Adrenal gland (tissue), 19 donors: ENCODE measurements at regions of chr18 and their contacts with region 1.

Region 1: DNA sequence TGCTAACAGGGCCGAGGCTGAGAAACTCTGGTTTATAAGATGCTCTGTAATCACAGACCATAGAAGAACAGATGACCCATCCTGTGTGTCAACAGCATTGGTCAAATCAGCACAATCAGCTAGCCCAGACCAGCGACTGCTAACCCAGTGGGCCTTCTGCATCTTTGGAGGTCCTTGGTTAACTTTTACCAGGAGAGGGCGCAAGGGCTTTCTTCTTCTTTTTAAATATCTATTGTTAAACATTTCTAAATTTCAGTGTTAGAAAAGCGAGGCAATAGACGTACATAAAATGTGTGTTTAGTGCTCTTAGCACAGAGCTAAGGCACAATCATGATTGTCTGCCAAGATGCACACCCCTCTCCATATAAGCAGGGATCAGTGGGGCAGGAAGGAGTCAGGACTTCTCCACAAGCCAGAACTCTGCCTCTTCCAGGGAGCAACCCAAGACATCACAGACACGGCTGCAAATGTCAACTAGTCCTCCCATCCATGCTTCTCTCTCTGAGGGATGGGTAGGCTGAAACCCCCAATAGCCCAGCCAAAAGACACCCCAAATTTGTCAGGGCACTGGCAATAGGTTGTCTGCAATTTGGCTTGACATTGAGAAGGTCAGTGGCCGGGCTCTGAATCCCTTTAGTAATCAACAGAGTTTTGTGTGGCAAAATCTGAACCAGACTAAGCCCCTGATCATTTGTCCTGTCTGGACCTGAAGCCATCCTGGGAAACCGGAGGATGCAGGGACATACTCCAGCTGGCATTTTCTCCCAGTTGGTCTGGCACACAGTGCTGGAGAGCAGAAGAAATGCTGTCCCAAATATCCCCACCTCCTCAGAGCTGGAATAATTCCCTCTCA is 188.2 kb downstream of the BCL2 start:
- DNase-seq: peak; percentile 27 to 79 (median 48)
- H3K4me3 ChIP-seq: no peak overlapping the region
- H3K27ac ChIP-seq: no peak overlapping the region
- H3K4me1 ChIP-seq: no peaks in the 10 kb centered on the region
- H3K27me3 ChIP-seq: no peaks in the 10 kb centered on the region
- CTCF ChIP-seq: peak; percentile 44 to 66 (median 58)
- POLR2A ChIP-seq: no peak

Region 2: DNA sequence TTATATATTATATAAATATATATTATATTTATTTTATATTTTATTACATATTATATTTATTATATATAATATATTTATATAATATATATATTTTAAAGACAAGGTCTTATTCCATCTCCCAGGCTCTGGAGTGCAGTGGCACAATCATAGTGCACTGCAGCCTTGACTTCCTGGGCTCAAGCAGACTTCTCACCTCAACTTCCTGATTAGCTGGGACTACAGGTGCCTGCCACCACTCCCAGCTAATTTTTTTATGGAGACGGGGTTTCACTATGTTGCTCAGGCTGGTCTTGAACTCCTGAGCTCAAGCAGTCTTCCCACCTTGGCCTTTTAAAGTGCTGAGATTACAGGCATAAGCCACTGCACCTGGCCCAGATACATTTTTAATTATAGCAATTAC is 305.9 kb before region 1 on chr18:
- intact Hi-C with region 1: no loop called
- DNase-seq: no peak
- H3K4me3 ChIP-seq: no peak overlapping the region
- H3K27ac ChIP-seq: no peak overlapping the region
- H3K4me1 ChIP-seq: peaks cover 4 to 27% of the 10 kb centered on the region in 2 donors
- H3K27me3 ChIP-seq: no peaks in the 10 kb centered on the region
- CTCF ChIP-seq: no peak
- POLR2A ChIP-seq: no peak

Region 3: DNA sequence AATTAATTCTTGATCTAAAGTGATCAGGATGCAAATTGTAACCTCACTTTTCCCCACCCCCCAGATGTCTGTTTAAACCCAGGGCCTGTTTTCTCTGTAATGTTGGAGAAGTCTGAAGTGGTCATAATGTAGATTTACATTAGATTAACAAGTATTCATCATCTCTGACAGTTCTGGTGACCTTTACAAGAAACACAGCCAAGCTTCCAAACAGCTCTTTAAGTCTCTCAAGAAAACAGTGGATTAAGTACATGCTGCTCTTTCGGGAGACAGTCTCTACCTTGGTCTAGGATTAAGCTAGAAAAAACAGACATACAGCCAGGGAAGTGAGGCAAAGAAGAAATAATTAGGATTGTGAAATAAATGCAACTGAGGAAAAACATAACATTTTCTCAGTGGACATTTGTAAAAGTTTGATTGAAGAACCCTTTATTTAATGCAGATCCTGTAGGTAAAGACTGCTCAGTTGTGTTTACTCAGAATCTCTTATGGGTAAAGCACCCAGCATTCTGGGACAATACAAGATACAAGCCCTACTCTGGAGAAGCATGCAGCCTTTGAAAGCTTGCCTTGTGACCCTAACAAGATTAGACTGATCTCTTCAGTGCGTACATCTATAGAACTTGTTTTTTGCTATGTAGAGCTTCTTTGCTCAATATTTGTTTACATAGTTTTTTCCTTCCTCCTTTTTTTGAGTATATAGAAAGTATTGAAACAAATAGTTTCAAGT is 212.1 kb before region 1 on chr18:
- intact Hi-C with region 1: no loop called
- DNase-seq: no peak
- H3K4me3 ChIP-seq: no peak overlapping the region
- H3K27ac ChIP-seq: no peak overlapping the region
- H3K4me1 ChIP-seq: peaks cover 0 to 3% of the 10 kb centered on the region in 2 donors
- H3K27me3 ChIP-seq: no peaks in the 10 kb centered on the region
- CTCF ChIP-seq: no peak
- POLR2A ChIP-seq: no peak

Region 4: DNA sequence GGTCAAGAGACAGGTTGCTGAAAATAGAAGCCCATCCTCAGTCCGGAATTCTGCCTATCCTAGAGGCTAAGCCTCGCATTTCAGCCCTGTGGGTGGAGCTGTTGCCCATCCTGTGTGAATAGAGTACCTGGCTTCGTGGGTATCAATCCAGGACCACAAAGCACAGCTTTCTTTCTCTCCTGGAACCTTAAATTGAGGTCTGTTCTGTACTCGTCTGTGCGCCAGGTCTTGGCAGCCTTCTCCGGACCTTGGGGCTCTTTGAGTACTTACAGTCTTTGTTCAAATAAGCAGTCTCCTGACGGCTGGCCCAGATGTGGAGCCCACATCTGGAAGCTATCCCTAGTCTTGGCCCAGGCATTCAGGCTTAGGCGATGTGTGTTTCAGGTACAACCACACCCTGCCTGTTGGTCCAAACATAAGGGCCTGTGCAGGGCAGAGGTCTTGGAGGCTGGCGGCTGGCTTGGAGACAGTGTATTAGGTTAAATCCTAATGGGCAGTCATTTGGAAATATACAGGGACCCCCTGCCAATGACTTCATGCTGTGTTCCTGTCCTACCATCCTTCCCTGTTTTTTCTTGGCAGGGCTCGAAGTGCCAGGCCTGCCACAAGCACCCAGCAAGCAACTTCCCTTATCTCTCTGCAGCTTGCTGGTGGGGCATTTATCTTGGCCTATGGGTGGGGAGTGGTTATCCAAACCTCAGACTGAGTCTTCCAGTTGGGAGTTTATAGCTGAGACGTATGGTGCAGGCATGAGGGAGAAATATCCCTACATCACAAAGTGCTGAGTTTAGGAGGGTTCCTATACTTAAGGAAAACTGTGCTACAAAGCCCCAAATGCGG is 105.9 kb before region 1 on chr18:
- intact Hi-C with region 1: loop called in 1 of 2 experiments (anchors 10 kb)
- DNase-seq: peak in 1 of 7 donors; percentile 60
- H3K4me3 ChIP-seq: no peak overlapping the region
- H3K27ac ChIP-seq: no peak overlapping the region
- H3K4me1 ChIP-seq: no peaks in the 10 kb centered on the region
- H3K27me3 ChIP-seq: no peaks in the 10 kb centered on the region
- CTCF ChIP-seq: peak in 2 of 6 experiments; percentile 10 to 13
- POLR2A ChIP-seq: no peak

Region 5: GRCh38 chr18:63320046-63320689 is 188.8 kb after region 1 on chr18:
- intact Hi-C with region 1: loop called (anchors 5 kb)
- DNase-seq: peak; percentile 70 to 87 (median 78)
- H3K4me3 ChIP-seq: peak overlapping the region in 2 of 4 donors; percentile 21 to 78
- H3K27ac ChIP-seq: peak overlapping the region in 3 of 5 donors; percentile 53 to 87 (median 65)
- H3K4me1 ChIP-seq: peaks cover 0 to 4% of the 10 kb centered on the region in 2 donors
- H3K27me3 ChIP-seq: peaks cover 5% of the 10 kb centered on the region
- CTCF ChIP-seq: peak in 1 of 6 experiments; percentile 45
- POLR2A ChIP-seq: peak in 1 of 2 donors; percentile 32

Region 6: DNA sequence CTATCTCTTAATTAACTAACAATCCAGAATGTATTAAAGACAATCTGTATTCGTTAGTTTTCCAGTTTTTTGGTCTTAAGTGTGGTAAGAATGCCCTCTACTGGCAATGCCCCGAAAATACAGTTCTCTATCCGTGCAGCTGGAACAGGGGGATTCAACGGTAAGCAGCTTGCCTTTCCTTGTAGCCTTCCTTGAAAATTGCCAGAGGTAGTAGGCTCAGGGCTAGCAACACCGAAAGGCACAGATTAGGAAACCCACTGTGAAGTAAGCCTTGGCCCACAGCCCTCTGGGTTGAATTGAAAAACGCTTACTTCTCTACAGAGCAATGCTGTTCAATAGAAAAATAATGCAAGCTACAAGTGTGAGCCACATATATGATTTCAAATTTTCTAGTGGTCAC is 308.0 kb after region 1 on chr18:
- intact Hi-C with region 1: loop called (anchors 5 to 10 kb)
- DNase-seq: peak in 6 of 7 donors; percentile 31 to 69 (median 42)
- H3K4me3 ChIP-seq: no peak overlapping the region
- H3K27ac ChIP-seq: no peak overlapping the region
- H3K4me1 ChIP-seq: peaks cover 0 to 6% of the 10 kb centered on the region in 2 donors
- H3K27me3 ChIP-seq: peaks cover 3% of the 10 kb centered on the region
- CTCF ChIP-seq: peak; percentile 66 to 88 (median 78)
- POLR2A ChIP-seq: no peak

Region 7: GRCh38 chr18:63444567-63444966 is 313.2 kb after region 1 on chr18:
- intact Hi-C with region 1: loop called (anchors 5 to 10 kb)
- DNase-seq: no peak
- H3K4me3 ChIP-seq: no peak overlapping the region
- H3K27ac ChIP-seq: peak overlapping the region in 1 of 5 donors; percentile 49
- H3K4me1 ChIP-seq: no peaks in the 10 kb centered on the region
- H3K27me3 ChIP-seq: peaks cover 3% of the 10 kb centered on the region
- CTCF ChIP-seq: no peak
- POLR2A ChIP-seq: no peak